ENCODE measurements at regions of chr17 and their contacts with region 1.

Region 1: DNA sequence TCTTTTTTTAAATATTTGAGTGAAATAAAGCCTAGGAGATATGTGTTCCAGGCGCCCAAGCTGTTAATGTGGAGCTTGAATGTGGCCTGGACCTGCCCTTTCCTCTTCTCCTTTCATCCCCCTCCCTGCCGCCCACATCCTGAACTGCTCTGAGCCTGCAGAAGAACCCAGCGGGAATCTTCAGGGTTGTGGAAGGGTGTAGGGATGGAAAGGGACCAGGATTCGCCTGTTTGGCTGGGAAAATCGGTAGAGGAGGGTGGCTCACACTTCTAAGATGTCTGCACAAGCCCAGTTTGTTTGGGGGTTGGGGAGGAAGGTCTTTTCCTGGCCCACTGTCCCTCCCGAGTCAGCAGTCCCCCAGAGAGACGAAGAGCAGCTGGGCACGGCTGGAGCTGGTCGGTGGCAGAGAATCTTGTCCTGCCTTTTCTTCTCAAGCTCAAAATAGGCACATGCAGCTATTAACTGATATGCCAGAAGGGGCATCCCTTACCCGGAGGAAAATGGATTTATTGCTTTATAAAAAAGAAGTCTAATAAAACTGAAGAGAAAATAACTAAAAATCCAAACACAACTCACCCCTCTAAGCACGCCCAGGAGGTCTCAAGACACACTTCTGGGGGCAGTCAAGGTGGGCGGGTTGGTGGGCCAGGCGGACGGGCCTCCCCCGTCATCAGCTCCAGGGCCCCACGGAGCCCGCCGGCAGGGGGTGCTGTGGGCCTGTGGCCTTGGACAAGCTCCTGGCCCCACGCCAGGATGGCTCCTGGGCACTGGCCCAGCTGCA is 11.5 kb upstream of the PITPNA start:
- DNase-seq: peak; percentile 59 to 74
- ATAC-seq: peak; percentile 46 to 54
- H3K4me3 ChIP-seq: no peak overlapping the region
- H3K27ac ChIP-seq: peak overlapping the region; percentile 90 to 97 (median 95)
- H3K4me1 ChIP-seq: peaks cover 40 to 44% of the 10 kb centered on the region in 2 donors
- H3K27me3 ChIP-seq: no peaks in the 10 kb centered on the region
- CTCF ChIP-seq: peak; percentile 97 to 99 (median 99)
- POLR2A ChIP-seq: no peak

Region 2: DNA sequence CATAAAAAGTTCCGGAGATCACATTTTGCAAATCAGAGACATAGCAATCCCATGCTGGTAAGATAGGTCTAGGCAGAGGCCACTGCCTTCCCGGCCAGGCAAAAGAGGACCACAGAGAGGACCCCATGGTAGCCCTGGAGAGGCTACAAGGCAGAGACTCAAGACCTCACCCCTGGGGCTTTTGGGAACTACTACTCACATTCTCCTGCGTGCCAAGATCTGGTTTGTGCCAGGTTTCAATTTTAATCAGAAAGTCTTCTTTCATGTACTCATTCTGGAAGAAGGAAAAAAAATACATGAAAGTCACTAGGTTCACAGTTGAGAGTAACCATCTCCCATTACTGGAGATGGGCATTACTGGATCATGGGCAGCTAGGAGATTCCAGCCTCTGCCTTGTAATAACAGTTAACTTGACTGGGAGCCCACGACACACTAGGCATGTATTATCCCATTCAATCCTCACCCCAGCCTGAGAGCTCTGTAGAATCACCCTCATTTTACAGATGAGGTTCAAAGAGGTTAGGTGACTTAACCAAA is 32.7 kb before region 1 on chr17:
- in situ Hi-C with region 1: no loop called
- intact Hi-C with region 1: no loop called
- DNase-seq: no peak
- ATAC-seq: no peak
- H3K4me3 ChIP-seq: no peak overlapping the region
- H3K27ac ChIP-seq: no peak overlapping the region
- H3K4me1 ChIP-seq: no peaks in the 10 kb centered on the region
- H3K27me3 ChIP-seq: no peaks in the 10 kb centered on the region
- CTCF ChIP-seq: no peak
- POLR2A ChIP-seq: no peak

Region 3: GRCh38 chr17:1590031-1590748 is 16.1 kb after region 1 on chr17:
- in situ Hi-C with region 1: no loop called
- intact Hi-C with region 1: loop called (anchors 1 kb)
- DNase-seq: peak; percentile 95 to 98
- ATAC-seq: peak; percentile 79 to 84
- H3K4me3 ChIP-seq: peak overlapping the region in 3 of 4 donors; percentile 14 to 30 (median 18)
- H3K27ac ChIP-seq: peak overlapping the region; percentile 91 to 98 (median 96)
- H3K4me1 ChIP-seq: peaks cover 78% of the 10 kb centered on the region in 2 donors
- H3K27me3 ChIP-seq: no peaks in the 10 kb centered on the region
- CTCF ChIP-seq: peak in 1 of 5 experiments; percentile 12
- POLR2A ChIP-seq: peak; percentile 58 to 64

Region 4: GRCh38 chr17:1716076-1716995 is 142.2 kb after region 1 on chr17:
- in situ Hi-C with region 1: no loop called
- intact Hi-C with region 1: loop called (anchors 5 kb)
- DNase-seq: peak; percentile 100
- ATAC-seq: peak; percentile 47 to 59
- H3K4me3 ChIP-seq: peak overlapping the region; percentile 91 to 95 (median 94)
- H3K27ac ChIP-seq: peak overlapping the region; percentile 99 to 100 (median 100)
- H3K4me1 ChIP-seq: peaks cover 52 to 55% of the 10 kb centered on the region in 2 donors
- H3K27me3 ChIP-seq: no peaks in the 10 kb centered on the region
- CTCF ChIP-seq: no peak
- POLR2A ChIP-seq: peak; percentile 99 to 100

Region 5: DNA sequence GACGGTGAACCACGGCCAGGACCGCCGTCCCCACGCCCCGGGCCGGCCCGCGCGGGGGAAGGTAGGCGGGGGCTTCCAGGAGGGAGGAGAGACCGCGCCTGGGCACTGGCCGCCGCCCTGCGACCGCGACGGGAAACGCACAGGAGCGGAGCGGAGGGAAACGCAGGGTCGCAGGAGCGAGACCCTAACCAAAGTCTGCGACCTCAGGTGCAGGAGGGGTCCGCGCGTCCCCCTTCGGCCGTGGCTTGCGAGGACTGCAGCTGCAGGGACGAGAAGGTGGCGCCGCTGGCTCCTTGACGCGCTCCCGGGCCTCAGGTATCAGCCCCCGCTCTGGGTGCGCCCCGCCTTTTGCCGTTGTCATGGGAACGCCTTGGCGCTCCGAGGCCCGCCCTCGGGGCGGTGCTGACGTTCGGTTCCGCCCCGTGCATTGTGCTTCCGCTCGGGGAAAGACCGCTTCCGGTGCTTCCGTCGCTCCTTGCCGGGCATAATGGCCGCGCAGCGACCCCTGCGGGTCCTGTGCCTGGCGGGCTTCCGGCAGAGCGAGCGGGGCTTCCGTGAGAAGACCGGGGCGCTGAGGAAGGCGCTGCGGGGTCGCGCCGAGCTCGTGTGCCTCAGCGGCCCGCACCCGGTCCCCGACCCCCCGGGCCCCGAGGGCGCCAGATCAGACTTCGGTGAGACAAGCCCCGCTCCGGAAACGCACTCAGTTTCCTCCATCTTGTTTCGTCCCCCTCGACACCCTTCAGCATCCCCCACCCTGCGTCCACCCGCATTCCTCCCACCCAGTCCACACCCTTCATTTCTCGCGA is 467.7 kb after region 1 on chr17 and contains the start of gene OVCA2:
- in situ Hi-C with region 1: no loop called
- intact Hi-C with region 1: loop called (anchors 10 kb)
- DNase-seq: peak; percentile 85 to 87
- ATAC-seq: peak; percentile 88 to 93
- H3K4me3 ChIP-seq: peak within 1 kb of the TSS; percentile 72 to 100 (median 80)
- H3K27ac ChIP-seq: peak within 1 kb of the TSS; percentile 85 to 97 (median 92)
- H3K4me1 ChIP-seq: peaks cover 26% of the 10 kb centered on the region in 2 donors
- H3K27me3 ChIP-seq: no peaks in the 10 kb centered on the region
- CTCF ChIP-seq: peak; percentile 48 to 69 (median 63)
- POLR2A ChIP-seq: peak; percentile 55 to 67
- total RNA-seq, gene OVCA2: 12.6 to 50.2 (median 34.4) TPM

Measured in gastrocnemius medialis (tissue), 4 donors.